ENCODE measurements at regions of chr1 and their contacts with region 1.

Region 1: GRCh38 chr1:153202006-153202405 is 1.2 kb upstream of the LELP1 start:
- DNase-seq: no peak
- ATAC-seq: no peak
- H3K4me3 ChIP-seq: no peak overlapping the region
- H3K4me3 Mint-ChIP-seq: no peak overlapping the region
- H3K27ac ChIP-seq: no peak overlapping the region
- H3K27ac Mint-ChIP-seq: no peak overlapping the region
- H3K4me1 ChIP-seq: no peaks in the 10 kb centered on the region
- H3K4me1 Mint-ChIP-seq: no peaks in the 10 kb centered on the region
- H3K27me3 ChIP-seq: no peaks in the 10 kb centered on the region
- H3K27me3 Mint-ChIP-seq: peaks cover 14 to 60% (median 40%) of the 10 kb centered on the region in 5 donors

Region 2: DNA sequence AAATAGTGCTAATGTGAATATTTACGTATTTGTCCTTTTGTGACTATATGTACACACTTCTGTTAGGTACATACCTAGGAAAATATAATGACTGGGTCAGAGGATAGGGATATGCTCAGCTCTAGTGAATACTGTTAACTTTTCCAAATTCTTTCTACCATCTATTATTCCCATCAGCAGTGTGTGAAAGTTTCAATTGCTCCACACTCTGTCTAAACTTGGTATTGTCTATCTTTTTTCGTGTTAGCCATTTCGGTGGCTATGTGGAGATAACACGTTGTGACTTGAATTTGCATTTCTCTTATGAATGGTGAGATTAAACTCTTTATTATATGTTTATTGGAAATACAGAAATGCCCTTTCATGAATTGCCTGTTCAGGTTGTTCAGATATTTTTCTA is 21.4 kb before region 1 on chr1:
- CTCF ChIA-PET with region 1: no interaction called
- POLR2A ChIA-PET with region 1: no interaction called
- intact Hi-C with region 1: loop called in 1 of 2 experiments (anchors 1 kb)
- DNase-seq: no peak
- ATAC-seq: no peak
- H3K4me3 ChIP-seq: no peak overlapping the region
- H3K4me3 Mint-ChIP-seq: no peak overlapping the region
- H3K27ac ChIP-seq: no peak overlapping the region
- H3K27ac Mint-ChIP-seq: no peak overlapping the region
- H3K4me1 ChIP-seq: no peaks in the 10 kb centered on the region
- H3K4me1 Mint-ChIP-seq: no peaks in the 10 kb centered on the region
- H3K27me3 ChIP-seq: no peaks in the 10 kb centered on the region
- H3K27me3 Mint-ChIP-seq: peaks cover 6 to 43% (median 29%) of the 10 kb centered on the region in 5 donors